Psoas muscle (tissue), 8 donors: ENCODE measurements at regions of chr20 and their contacts with region 1.

Region 1: DNA sequence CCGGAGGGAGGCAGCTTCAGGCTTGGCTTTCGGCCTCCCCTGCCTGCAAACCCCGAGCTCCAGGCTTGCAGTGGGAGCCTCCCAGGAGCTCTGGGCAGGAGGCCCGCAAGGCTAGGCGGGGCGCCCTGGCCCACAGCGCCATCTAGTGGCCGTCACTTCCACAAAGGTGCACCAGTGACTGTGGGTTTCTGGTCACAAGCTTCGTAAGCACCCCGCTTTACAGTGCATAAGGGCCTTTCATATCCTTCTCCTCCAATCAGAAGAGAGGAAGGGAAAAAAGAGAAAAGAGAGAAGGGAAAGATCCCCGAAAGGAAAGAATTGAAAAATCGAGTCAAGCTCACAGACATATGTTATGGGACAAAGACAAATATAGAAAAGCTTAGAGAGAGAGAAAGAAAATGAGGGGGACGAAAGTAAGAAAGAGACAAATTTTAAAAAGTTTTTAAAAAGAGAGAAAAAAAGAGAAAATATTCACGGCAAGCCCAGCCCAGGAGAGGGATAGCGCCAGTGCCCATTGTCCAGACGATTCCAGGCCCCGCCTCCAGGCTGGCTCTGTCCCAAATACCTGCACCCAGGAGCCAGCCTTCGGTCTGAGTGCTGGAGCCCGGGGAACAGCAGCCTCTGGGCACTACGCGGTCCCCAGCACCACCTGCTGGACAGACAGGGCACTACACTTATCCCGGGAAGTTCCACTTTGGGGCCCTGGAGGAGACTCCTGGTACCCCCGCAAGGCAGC is 207.1 kb downstream of the PREX1 start:
- DNase-seq: peak; percentile 83 to 89
- ATAC-seq: peak; percentile 90 to 95 (median 93)
- H3K4me3 ChIP-seq: peak overlapping the region; percentile 38
- H3K27ac ChIP-seq: no peak overlapping the region
- H3K4me1 ChIP-seq: peaks cover 5% of the 10 kb centered on the region
- H3K27me3 ChIP-seq: peaks cover 0 to 1% (median 0%) of the 10 kb centered on the region in 3 donors
- CTCF ChIP-seq: peak; percentile 89

Region 2: DNA sequence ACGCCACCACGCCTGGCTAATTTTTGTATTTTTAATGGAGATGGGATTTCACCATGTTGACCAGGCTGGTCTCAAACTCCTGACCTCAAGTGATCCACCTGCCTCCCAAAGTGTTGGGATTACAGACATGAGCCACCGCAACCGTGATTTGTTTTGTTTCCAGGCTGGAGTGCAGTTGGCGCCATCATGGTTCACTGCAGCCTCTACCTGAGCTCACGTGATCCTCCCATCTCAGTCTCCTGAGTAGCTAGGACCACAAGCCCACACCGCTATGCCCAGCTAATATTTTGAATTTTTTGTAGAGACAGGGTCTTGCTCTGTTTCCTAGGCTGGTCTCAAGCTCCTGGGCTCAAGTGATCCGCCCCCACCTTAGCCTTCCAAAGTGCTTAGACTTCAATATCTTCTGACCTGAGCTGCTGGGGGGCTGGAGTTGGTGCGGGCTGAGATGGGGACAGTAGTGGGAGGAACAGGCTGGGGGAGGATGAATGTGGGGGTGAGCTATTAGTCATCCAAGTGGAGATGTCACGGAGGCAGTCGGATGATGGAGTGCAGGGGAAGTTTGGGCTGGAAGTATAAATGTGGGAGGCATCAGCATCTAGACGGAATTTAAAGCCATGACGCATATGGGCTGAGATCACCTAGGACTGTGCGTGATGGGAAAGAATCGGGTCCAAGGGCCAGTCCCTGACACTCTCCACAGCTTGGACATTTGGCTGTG is 1241.1 kb before region 1 on chr20:
- intact Hi-C with region 1: no loop called
- DNase-seq: no peak
- ATAC-seq: no peak
- H3K4me3 ChIP-seq: no peak overlapping the region
- H3K27ac ChIP-seq: no peak overlapping the region
- H3K4me1 ChIP-seq: peaks cover 11% of the 10 kb centered on the region
- H3K27me3 ChIP-seq: no peaks in the 10 kb centered on the region
- CTCF ChIP-seq: no peak

Region 3: DNA sequence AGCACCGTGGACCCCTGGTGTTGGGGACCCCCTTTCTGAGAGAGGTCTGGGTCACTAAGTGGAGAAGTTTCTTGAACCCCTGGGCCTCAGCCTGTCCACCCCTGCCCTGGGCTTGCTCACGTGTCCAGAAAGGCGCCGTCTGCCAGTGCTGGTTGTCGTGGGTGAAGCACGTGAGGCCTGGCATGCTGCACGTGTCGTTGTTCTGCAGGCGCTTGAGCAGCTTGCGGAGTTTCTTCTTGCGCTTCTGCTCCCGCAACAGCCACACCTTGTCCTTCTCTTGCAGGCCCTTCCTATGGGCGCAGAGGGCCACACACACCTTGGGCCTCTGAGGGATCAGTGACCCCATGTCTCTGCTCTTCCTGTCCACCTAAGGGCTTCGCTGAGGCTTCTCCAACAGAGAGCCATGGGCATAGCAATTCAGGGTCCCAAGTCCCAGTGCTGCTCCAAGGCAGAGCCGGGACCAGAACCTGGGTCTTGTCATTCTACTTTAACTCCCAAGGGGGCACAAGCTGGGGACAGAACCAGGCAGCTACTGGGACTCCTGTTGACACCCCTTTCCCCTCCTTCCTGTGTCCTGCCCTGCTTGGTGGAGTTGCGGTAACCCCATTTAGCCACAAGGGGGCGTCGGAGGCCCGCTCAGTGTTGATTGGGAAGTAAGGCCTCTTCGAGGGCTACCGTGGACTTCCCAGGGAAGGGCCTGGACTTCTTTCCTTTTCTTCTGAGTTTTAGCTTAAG is 957.2 kb before region 1 on chr20:
- intact Hi-C with region 1: loop called in 1 of 2 experiments (anchors 2 kb)
- DNase-seq: peak; percentile 74 to 87
- ATAC-seq: peak; percentile 69 to 82 (median 78)
- H3K4me3 ChIP-seq: no peak overlapping the region
- H3K27ac ChIP-seq: no peak overlapping the region
- H3K4me1 ChIP-seq: no peaks in the 10 kb centered on the region
- H3K27me3 ChIP-seq: no peaks in the 10 kb centered on the region
- CTCF ChIP-seq: peak; percentile 94

Region 4: GRCh38 chr20:47672166-47672565 is 948.5 kb before region 1 on chr20:
- intact Hi-C with region 1: loop called (anchors 2 to 5 kb)
- DNase-seq: peak in 1 of 2 donors; percentile 41
- ATAC-seq: no peak
- H3K4me3 ChIP-seq: no peak overlapping the region
- H3K27ac ChIP-seq: no peak overlapping the region
- H3K4me1 ChIP-seq: no peaks in the 10 kb centered on the region
- H3K27me3 ChIP-seq: no peaks in the 10 kb centered on the region
- CTCF ChIP-seq: no peak

Region 5: DNA sequence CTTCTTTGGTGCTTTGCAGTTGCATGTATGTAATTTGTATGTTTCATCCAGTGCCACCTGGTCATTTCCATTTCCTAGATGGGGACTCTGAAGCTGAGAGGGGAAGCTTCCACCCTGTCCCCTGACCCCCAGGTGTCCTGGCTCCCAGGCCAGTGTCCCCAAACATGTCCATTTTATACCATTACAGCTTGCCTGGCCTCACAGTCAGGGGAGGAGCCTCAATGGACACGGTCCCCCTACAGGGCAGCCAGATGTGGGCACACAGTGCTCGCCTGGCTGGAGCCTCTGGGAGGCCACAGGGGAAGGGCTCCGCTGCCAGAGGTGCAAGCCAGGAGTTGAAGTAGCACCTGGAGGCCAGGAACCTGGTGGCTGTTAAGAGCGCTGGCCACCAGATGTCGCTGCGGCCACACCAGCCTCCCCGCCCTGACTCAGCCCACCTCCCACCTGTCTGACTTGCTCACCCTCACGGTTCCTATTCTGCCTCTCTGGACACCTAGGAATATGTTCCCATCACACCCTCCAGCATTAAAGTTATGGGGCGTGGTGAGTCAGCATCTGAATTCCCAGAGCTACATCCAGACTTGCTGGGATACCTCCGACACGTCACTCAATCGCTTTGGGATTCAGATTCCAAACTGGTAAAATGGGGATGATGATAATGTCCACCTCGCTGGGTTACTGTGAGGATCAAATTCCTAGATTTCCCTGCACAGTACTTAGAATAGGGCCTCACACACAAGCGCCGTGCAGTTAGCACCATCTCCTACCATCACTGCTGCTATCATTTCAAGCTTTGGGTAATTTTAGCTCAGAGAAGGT is 942.8 kb before region 1 on chr20:
- intact Hi-C with region 1: loop called (anchors 2 to 5 kb)
- DNase-seq: no peak
- ATAC-seq: peak; percentile 39 to 61 (median 50)
- H3K4me3 ChIP-seq: no peak overlapping the region
- H3K27ac ChIP-seq: no peak overlapping the region
- H3K4me1 ChIP-seq: no peaks in the 10 kb centered on the region
- H3K27me3 ChIP-seq: no peaks in the 10 kb centered on the region
- CTCF ChIP-seq: peak; percentile 55

Region 6: GRCh38 chr20:47785854-47786764 is 834.6 kb before region 1 on chr20:
- intact Hi-C with region 1: loop called (anchors 5 kb)
- DNase-seq: peak; percentile 62 to 70
- ATAC-seq: peak; percentile 78 to 83 (median 81)
- H3K4me3 ChIP-seq: peak overlapping the region; percentile 64
- H3K27ac ChIP-seq: peak overlapping the region; percentile 60
- H3K4me1 ChIP-seq: peaks cover 4% of the 10 kb centered on the region
- H3K27me3 ChIP-seq: peaks cover 0 to 52% (median 16%) of the 10 kb centered on the region in 3 donors
- CTCF ChIP-seq: peak; percentile 51